ENCODE measurements at regions of chr4 and their contacts with region 1.

Region 1: GRCh38 chr4:185134307-185134869 is 8.7 kb upstream of the SLC25A4 start:
- DNase-seq: peak in 2 of 35 experiments; percentile 20 to 67
- ATAC-seq: peak; percentile 57 to 71 (median 64)
- H3K4me3 ChIP-seq: no peak overlapping the region
- H3K4me3 Mint-ChIP-seq: no peak overlapping the region
- H3K27ac ChIP-seq: no peak overlapping the region
- H3K27ac Mint-ChIP-seq: no peak overlapping the region
- H3K4me1 ChIP-seq: no peaks in the 10 kb centered on the region
- H3K4me1 Mint-ChIP-seq: peaks cover 0 to 7% (median 1%) of the 10 kb centered on the region in 3 donors
- H3K27me3 ChIP-seq: peaks cover 9 to 39% of the 10 kb centered on the region in 2 experiments
- H3K27me3 Mint-ChIP-seq: peaks cover 28 to 41% of the 10 kb centered on the region in 2 donors

Region 2: GRCh38 chr4:184873054-184873453 is 261.3 kb before region 1 on chr4:
- CTCF ChIA-PET with region 1: no interaction called
- POLR2A ChIA-PET with region 1: no interaction called
- DNase-seq: no peak
- ATAC-seq: no peak
- H3K4me3 ChIP-seq: no peak overlapping the region
- H3K4me3 Mint-ChIP-seq: no peak overlapping the region
- H3K27ac ChIP-seq: no peak overlapping the region
- H3K27ac Mint-ChIP-seq: no peak overlapping the region
- H3K4me1 ChIP-seq: no peaks in the 10 kb centered on the region
- H3K4me1 Mint-ChIP-seq: no peaks in the 10 kb centered on the region
- H3K27me3 ChIP-seq: no peaks in the 10 kb centered on the region
- H3K27me3 Mint-ChIP-seq: peaks cover 0 to 3% of the 10 kb centered on the region in 2 donors

Region 3: DNA sequence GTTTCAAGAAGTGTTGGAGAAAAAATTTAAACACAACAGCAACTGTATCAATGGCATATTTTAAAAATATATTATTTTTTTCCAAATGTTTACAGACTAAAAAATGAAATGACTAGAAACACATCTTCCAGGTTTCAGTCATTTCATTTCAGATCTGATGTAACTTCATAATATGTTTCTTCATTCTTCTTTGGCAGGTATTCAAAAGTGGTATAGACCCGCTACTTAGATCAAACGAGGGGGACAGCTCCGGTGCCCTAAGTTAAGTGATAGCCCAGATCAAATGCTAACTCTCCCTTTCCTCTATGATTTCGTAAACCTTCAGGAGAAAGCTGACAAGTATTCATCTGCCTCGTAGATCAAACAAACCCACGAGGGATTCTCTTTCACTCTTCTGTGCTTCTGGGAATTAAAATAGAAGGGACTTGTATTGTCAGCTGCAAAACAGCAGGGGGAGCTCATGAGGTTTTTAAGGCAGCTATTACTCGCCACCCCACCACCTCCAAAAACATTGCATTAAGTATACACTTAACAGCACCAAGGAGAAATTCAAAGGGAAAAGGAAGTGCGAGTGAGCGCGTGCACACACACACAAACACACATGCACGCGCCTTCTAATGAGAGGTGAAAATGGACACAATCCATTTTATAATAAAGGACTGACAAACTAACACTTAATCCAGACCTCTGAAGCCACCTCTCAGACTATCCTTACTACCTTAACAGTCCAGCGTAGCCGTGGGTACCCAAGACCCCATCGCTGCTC is 94.7 kb before region 1 on chr4:
- CTCF ChIA-PET with region 1: interaction called in 1 of 2 experiments, 42 read pairs
- POLR2A ChIA-PET with region 1: no interaction called
- DNase-seq: peak in 30 of 35 experiments; percentile 7 to 72 (median 28)
- ATAC-seq: peak; percentile 70 to 83 (median 74)
- H3K4me3 ChIP-seq: no peak overlapping the region
- H3K4me3 Mint-ChIP-seq: no peak overlapping the region
- H3K27ac ChIP-seq: no peak overlapping the region
- H3K27ac Mint-ChIP-seq: no peak overlapping the region
- H3K4me1 ChIP-seq: peaks cover 0 to 3% of the 10 kb centered on the region in 2 experiments
- H3K4me1 Mint-ChIP-seq: peaks cover 4 to 8% (median 4%) of the 10 kb centered on the region in 3 donors
- H3K27me3 ChIP-seq: peaks cover 0 to 5% of the 10 kb centered on the region in 2 experiments
- H3K27me3 Mint-ChIP-seq: peaks cover 10 to 40% of the 10 kb centered on the region in 2 donors